GM18951 (cell line): ENCODE measurements at regions of chr2 and their contacts with region 1.

Region 1: DNA sequence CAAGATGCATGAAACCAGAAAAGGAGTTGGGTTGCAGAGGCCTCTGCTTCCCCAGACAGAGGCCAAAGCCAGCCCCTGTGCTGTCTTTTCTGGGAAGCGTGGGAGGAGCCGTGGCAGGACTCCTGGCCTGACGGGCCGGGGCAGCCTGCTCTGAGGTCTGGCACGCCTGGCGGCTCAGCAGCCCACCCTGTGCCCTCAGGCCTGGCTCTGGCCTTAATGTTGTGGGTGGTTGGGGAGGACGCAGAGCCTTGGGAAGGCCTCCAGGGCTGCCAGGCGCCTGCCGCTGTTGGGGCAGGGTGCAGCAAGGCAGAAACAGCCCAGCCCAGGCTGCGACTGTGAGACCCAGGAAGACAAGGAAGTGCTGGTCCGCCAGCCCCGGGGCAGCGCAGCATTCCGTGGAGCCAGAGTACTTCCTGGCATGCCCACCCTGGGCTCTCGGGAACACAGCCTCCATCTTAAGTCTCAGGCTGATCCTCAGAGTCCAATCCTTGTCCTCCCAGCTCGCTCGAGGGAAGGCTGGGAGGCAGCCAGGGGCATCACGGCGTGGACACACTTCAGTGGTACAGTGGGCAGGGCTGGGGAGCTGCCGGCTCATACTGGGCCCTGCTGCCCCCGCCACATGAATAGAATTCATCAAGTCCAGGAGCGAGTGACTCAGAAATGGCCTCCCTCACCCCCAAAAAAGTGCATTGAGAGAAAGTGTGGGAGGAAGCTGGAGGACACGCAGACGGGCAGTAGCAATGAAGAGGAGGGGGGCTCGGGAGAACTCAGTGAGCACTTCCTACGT is 72.6 kb downstream of the EMX1 start:
- POLR2A ChIP-seq: no peak

Region 2: GRCh38 chr2:72827999-72828646 is 161.8 kb before region 1 on chr2:
- in situ Hi-C with region 1: no loop called
- POLR2A ChIP-seq: no peak

Region 3: DNA sequence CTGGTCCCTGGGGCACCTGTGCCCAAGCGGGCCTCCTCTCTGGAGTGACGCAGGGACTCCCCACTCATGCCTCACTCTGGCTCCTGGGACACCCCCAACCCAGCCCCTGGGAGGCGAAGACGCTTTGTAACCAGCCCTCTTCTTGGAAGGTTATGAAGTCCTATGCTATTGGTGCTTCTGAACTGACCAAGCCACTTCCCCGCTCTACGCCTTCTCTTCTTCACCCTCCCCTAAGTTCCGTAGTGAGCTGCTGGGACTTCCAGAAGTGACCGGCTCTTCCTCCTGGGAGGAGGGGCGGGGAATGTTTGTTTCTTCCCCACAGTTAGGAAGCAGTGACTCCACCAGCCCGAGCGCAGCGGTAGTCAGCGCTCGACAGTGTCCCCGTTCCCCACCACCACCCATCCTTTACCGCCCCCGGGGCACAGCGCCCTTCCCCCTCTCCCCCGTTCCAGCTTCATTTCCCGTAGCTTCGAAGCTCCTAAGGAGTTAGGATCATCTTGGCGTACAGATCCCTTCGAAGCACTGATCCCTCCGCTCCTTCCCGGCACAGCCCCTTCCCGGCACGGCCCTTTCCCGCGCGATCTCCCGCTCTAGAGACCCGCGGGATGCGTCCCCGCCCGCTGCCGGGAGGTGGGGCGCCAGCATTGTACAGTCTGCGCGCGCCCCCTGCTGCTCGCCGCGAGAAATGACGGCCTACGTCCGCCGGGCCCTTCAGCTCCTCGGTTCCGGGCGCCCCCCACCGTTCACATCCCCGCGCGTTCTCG is 187.1 kb after region 1 on chr2:
- in situ Hi-C with region 1: loop called (anchors 10 kb)
- POLR2A ChIP-seq: no peak